ENCODE measurements at regions of chr2 and their contacts with region 1.

Region 1: GRCh38 chr2:173210270-173211196 is 134.9 kb downstream of the MAP3K20 start:
- DNase-seq: peak; percentile 93
- H3K4me3 ChIP-seq: no peak overlapping the region
- H3K27ac ChIP-seq: peak overlapping the region; percentile 76 to 85 (median 80)
- H3K4me1 ChIP-seq: peaks cover 0 to 85% (median 66%) of the 10 kb centered on the region in 4 donors
- H3K27me3 ChIP-seq: no peaks in the 10 kb centered on the region
- CTCF ChIP-seq: peak; percentile 64 to 91 (median 86)
- EP300 ChIP-seq: peak; percentile 32 to 76 (median 52)
- POLR2A ChIP-seq: no peak

Region 2: GRCh38 chr2:172806493-172806892 is 404.0 kb before region 1 on chr2:
- intact Hi-C with region 1: loop called (anchors 10 kb)
- DNase-seq: no peak
- H3K4me3 ChIP-seq: peak overlapping the region in 1 of 4 donors; percentile 4
- H3K27ac ChIP-seq: no peak overlapping the region
- H3K4me1 ChIP-seq: peaks cover 0 to 11% (median 7%) of the 10 kb centered on the region in 4 donors
- H3K27me3 ChIP-seq: no peaks in the 10 kb centered on the region
- CTCF ChIP-seq: peak; percentile 55 to 79 (median 74)
- EP300 ChIP-seq: no peak
- POLR2A ChIP-seq: no peak

Region 3: GRCh38 chr2:172931918-172932520 is 278.5 kb before region 1 on chr2:
- intact Hi-C with region 1: loop called (anchors 5 kb)
- DNase-seq: peak; percentile 73
- H3K4me3 ChIP-seq: peak overlapping the region in 3 of 4 donors; percentile 24 to 32 (median 28)
- H3K27ac ChIP-seq: peak overlapping the region; percentile 48 to 72 (median 54)
- H3K4me1 ChIP-seq: peaks cover 0 to 45% (median 27%) of the 10 kb centered on the region in 4 donors
- H3K27me3 ChIP-seq: no peaks in the 10 kb centered on the region
- CTCF ChIP-seq: peak; percentile 19 to 72 (median 54)
- EP300 ChIP-seq: no peak
- POLR2A ChIP-seq: no peak

Region 4: DNA sequence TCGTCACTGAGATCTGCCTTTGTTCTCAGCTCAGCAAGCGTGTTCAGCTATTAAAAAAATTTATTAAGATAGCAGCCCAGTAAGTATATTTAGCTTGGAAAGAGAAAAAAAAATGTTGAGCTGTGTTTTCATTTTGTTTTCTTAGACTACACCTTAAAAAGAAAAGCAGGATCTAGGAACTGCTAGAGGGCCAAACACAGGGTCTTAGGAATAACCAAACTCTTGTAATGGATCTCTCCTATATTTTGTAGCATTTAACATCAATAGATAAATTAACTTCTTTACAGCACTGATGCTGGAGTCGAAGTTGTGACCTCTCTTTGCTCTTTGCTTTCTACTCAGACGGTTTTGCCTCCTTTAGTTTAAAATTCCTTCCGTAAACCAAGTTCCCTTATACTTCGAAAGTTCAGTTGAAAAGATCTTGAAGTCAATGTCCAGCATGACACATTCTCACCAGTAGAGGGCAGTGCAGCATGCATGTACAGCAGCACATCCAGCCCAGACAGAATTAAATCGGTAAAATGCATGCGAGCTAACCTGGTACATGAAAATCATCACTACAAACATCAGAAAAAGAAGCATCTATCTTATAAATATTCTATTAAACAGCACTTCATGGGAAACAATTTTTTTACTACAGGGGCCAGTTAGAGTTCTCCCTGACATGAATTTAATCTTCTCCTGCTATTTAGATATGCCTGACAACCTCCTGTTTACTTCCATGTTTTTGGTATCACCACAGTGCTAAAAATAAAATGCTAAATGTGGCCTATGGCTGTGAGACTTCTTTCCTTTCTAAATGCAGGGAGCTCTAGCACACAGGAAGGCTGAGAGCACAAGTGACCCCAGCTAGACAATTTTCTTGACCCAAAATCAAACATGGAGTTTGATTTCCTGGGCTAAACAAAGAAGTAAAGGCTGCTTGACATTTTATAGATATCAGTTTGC is 183.1 kb before region 1 on chr2:
- intact Hi-C with region 1: loop called (anchors 1 kb)
- DNase-seq: peak; percentile 94
- H3K4me3 ChIP-seq: peak overlapping the region in 1 of 4 donors; percentile 4
- H3K27ac ChIP-seq: peak overlapping the region; percentile 62 to 83 (median 77)
- H3K4me1 ChIP-seq: peaks cover 0 to 33% (median 25%) of the 10 kb centered on the region in 4 donors
- H3K27me3 ChIP-seq: no peaks in the 10 kb centered on the region
- CTCF ChIP-seq: peak; percentile 89 to 97 (median 92)
- EP300 ChIP-seq: no peak
- POLR2A ChIP-seq: no peak

Region 5: GRCh38 chr2:173048897-173049661 is 161.5 kb before region 1 on chr2:
- intact Hi-C with region 1: no loop called
- DNase-seq: peak; percentile 94
- H3K4me3 ChIP-seq: no peak overlapping the region
- H3K27ac ChIP-seq: peak overlapping the region; percentile 50 to 76 (median 74)
- H3K4me1 ChIP-seq: peaks cover 0 to 55% (median 45%) of the 10 kb centered on the region in 4 donors
- H3K27me3 ChIP-seq: no peaks in the 10 kb centered on the region
- CTCF ChIP-seq: no peak
- EP300 ChIP-seq: peak in 2 of 4 donors; percentile 15 to 72
- POLR2A ChIP-seq: no peak

Region 6: DNA sequence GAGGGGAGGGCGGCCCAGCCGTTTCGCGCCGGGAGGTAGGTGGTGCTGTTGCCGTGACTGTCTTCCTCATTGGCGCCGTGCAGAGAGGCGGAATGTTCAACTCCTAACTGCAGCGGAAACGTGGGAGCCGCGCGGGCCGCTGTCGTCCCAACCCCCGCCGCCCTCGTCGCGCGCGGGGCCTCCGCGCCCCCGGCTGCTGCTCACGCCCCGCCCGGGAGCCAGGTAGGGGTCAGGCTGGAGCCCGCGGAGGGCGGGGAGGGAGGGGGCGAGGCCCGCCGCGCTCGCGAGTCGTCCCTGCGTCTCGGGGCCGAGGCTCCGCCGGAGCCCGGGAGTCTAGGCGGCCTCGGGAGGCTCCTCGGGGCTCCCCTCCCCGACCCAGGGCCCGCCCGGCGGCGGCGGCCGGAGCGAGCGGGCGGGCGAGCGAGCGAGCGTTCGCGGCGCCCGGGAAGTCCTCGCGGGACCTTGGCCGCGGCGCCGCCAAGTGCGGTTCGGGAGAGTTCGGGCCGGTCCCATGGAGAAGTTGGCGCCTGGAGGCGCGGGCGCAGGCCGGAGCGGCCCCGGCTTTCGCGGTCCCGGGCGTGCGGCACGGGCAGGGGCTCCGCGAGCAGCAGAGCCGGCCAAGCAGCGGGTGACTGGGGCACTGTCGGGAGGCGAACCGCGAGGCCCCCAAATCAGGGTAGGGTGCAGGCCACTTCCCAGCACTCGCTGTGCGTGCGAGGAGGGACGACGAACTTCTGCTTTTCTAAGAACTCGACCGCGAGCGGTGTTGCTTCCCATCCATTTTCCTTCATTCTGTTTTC is 134.6 kb before region 1 on chr2 and contains the start of gene MAP3K20:
- intact Hi-C with region 1: loop called (anchors 1 kb)
- DNase-seq: peak; percentile 92
- H3K4me3 ChIP-seq: peak within 1 kb of the TSS; percentile 54 to 92 (median 76)
- H3K27ac ChIP-seq: peak within 1 kb of the TSS; percentile 91 to 99 (median 96)
- H3K4me1 ChIP-seq: peaks cover 0 to 53% (median 40%) of the 10 kb centered on the region in 4 donors
- H3K27me3 ChIP-seq: no peaks in the 10 kb centered on the region
- CTCF ChIP-seq: peak in 1 of 4 experiments; percentile 44
- EP300 ChIP-seq: no peak
- POLR2A ChIP-seq: peak in 1 of 2 donors; percentile 14
- total RNA-seq, gene MAP3K20: 189 to 255 (median 219) TPM

Region 7: DNA sequence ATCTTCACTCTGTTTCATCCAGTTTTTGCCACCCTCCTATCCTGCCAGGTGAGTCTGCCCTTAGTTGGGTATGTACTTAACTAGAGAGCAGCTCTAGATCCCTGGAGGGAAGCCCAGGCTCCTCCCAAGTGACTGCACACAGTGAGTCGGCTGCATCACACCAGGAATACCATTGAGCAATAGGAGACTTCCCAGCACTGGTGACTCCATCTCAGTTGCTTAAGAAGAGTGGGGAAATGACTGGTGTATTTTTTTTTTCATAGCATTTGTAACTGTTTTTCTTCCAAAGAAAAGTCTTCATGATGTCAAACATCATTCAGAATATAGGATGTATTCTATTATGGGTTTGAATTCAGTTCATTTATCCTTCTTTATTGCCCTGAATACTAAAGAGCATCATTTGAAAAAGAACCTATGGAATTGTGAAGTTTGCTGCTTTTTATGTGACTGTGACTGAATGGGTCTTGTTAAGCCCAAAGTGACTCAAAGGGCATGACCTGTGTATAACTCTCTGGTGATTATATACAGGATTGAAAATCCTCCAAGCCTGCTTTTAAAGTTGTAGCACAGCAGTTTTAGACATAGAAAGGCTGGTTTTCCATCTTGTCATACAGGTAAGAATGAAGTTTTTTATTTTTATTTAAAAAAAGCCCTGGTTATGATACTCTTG is 50.6 kb before region 1 on chr2:
- intact Hi-C with region 1: loop called (anchors 2 kb)
- DNase-seq: peak; percentile 98
- H3K4me3 ChIP-seq: no peak overlapping the region
- H3K27ac ChIP-seq: peak overlapping the region; percentile 58 to 80 (median 70)
- H3K4me1 ChIP-seq: peaks cover 0 to 48% (median 41%) of the 10 kb centered on the region in 4 donors
- H3K27me3 ChIP-seq: no peaks in the 10 kb centered on the region
- CTCF ChIP-seq: no peak
- EP300 ChIP-seq: peak; percentile 59 to 92 (median 71)
- POLR2A ChIP-seq: no peak

Region 8: DNA sequence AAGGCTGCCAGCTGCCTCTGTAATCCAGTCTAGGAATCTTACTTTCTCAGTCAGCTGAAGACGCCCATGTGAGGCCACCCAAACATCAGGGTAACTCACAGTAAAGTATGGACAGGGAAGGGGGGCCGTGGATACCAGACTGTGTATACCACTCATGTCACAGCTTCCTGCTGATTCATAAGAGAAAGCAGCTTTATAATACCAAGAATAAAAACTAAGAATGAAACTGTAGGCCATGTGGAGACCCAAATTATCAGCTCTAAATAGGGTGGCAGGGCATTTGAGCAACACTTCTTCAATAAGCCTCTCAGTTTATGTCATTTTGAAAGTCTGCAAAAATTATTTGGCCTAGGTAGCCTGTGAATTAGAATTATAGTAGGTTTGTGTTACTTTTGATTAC is 29.1 kb after region 1 on chr2:
- intact Hi-C with region 1: no loop called
- DNase-seq: no peak
- H3K4me3 ChIP-seq: no peak overlapping the region
- H3K27ac ChIP-seq: no peak overlapping the region
- H3K4me1 ChIP-seq: no peaks in the 10 kb centered on the region
- H3K27me3 ChIP-seq: no peaks in the 10 kb centered on the region
- CTCF ChIP-seq: no peak
- EP300 ChIP-seq: no peak
- POLR2A ChIP-seq: no peak

Region 9: GRCh38 chr2:173271825-173272224 is 61.3 kb after region 1 on chr2:
- intact Hi-C with region 1: no loop called
- DNase-seq: no peak
- H3K4me3 ChIP-seq: no peak overlapping the region
- H3K27ac ChIP-seq: no peak overlapping the region
- H3K4me1 ChIP-seq: no peaks in the 10 kb centered on the region
- H3K27me3 ChIP-seq: no peaks in the 10 kb centered on the region
- CTCF ChIP-seq: no peak
- EP300 ChIP-seq: no peak
- POLR2A ChIP-seq: no peak